Panc1 (cell line): ENCODE measurements at regions of chr9 and their contacts with region 1.

Region 1: DNA sequence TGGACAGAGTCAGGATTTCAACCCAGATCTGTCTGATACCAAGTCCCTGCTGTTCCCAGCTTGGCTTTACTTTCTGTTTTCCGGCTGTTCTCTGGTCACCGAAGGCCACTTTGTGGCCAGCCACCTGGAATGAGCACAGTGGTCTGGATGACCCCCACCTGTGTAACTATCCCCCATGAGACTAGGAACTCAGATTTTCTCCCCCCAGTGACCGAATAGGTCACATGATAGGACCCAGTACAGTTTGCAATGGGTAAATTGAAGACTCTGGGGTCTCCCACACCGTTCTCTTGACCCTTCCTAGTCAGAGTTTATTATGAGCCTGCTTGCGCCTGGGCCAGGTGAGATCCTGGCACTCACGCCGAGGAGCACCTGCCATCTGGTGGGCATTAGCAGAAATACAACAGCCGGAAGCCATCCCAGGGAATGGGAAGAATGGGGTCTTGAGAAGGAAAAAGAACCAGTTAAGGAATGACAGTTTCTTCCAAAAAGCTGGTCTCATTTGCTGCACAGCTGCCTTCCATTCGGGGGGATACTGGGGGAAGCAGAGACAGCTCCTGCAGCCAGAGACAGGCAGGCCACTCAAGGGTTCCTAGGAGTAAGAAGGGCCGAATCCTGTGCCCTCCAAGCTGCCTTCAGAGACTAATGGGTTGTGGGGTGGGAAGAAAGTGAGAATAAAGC is 7.1 kb downstream of the PHYHD1 start:
- DNase-seq: no peak
- ATAC-seq: peak; percentile 93
- H3K4me3 ChIP-seq: no peak overlapping the region
- H3K27ac ChIP-seq: no peak overlapping the region
- H3K4me1 ChIP-seq: no peaks in the 10 kb centered on the region
- H3K27me3 ChIP-seq: no peaks in the 10 kb centered on the region
- CTCF ChIP-seq: peak; percentile 87

Region 2: DNA sequence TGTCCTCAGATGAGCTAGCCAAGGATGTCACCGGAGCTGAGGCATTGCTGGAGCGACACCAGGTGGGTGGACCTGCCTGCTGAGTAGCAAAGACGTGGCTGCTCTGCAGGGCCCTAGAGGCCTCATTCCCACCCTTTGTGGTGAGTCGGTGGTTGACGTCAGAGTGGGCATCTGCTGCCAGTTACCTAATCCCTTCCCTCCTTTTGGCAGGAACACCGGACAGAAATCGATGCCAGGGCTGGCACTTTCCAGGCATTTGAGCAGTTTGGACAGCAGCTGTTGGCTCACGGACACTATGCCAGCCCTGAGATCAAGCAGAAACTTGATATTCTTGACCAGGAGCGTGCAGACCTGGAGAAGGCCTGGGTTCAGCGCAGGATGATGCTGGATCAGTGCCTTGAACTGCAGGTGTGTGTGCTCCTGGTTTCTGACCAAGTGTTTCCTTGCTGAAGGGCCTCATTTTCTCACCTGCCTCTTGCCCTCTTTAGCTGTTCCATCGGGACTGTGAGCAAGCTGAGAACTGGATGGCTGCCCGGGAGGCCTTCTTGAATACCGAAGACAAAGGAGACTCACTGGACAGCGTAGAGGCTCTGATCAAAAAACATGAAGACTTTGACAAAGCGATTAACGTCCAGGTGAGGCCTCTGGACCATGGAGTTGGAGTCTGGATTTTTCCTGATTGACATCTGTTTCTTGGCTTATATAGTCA is 320.1 kb before region 1 on chr9:
- CTCF ChIA-PET with region 1: no interaction called
- POLR2A ChIA-PET with region 1: interaction called, 10 read pairs
- in situ Hi-C with region 1: no loop called
- intact Hi-C with region 1: no loop called
- DNase-seq: no peak
- ATAC-seq: no peak
- H3K4me3 ChIP-seq: no peak overlapping the region
- H3K27ac ChIP-seq: no peak overlapping the region
- H3K4me1 ChIP-seq: no peaks in the 10 kb centered on the region
- H3K27me3 ChIP-seq: no peaks in the 10 kb centered on the region
- CTCF ChIP-seq: no peak

Region 3: GRCh38 chr9:128863647-128864046 is 64.2 kb before region 1 on chr9:
- CTCF ChIA-PET with region 1: interaction called, 9 read pairs
- POLR2A ChIA-PET with region 1: no interaction called
- in situ Hi-C with region 1: no loop called
- intact Hi-C with region 1: loop called (anchors 5 kb)
- DNase-seq: no peak
- ATAC-seq: peak; percentile 92
- H3K4me3 ChIP-seq: no peak overlapping the region
- H3K27ac ChIP-seq: no peak overlapping the region
- H3K4me1 ChIP-seq: no peaks in the 10 kb centered on the region
- H3K27me3 ChIP-seq: no peaks in the 10 kb centered on the region
- CTCF ChIP-seq: peak; percentile 92